HAP-1 (cell line): ENCODE measurements at regions of chr13 and their contacts with region 1.

Region 1: DNA sequence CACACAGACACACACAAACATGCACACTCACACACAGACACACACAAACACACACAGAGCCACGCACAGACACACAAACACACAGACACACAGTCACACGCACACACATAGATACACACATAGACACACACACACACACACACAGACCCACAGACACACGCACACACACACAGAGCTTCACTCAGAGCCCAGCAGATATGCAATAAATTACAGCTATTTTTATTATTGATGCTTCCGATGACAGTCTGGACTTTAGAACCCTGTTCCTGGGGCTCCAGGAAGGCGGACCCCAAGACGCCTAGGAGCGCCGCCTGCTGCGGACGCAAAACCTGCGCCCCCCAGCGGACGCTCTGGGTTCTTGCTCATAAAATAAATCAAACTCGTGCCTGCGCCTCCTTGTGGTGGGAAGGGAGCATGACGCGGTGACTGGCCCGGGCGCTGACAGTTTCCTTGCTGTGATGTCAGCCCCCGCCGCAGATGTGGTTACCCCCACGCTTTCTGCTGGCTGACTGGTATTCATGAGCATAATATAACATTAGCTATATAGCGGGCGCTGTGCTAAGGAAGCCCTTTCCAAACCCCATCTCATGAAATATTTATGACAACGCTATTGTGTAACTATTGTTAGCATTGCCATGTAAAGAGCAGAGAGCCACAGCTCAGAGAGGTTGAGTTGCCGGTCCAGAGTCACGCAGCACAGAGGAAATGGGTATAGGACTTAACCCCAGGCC is 64.4 kb upstream of the TM9SF2 start:
- DNase-seq: peak; percentile 67 to 88
- H3K4me3 ChIP-seq: no peak overlapping the region; the same call in 1 of the 2 replicates
- H3K4me1 ChIP-seq: peaks cover 8% of the 10 kb centered on the region
- H3K27me3 ChIP-seq: no peaks in the 10 kb centered on the region

Region 2: GRCh38 chr13:98957731-98958442 is 479.0 kb before region 1 on chr13:
- in situ Hi-C with region 1: no loop called
- DNase-seq: no peak
- H3K4me3 ChIP-seq: no peak overlapping the region
- H3K4me1 ChIP-seq: no peaks in the 10 kb centered on the region
- H3K27me3 ChIP-seq: no peaks in the 10 kb centered on the region

Region 3: DNA sequence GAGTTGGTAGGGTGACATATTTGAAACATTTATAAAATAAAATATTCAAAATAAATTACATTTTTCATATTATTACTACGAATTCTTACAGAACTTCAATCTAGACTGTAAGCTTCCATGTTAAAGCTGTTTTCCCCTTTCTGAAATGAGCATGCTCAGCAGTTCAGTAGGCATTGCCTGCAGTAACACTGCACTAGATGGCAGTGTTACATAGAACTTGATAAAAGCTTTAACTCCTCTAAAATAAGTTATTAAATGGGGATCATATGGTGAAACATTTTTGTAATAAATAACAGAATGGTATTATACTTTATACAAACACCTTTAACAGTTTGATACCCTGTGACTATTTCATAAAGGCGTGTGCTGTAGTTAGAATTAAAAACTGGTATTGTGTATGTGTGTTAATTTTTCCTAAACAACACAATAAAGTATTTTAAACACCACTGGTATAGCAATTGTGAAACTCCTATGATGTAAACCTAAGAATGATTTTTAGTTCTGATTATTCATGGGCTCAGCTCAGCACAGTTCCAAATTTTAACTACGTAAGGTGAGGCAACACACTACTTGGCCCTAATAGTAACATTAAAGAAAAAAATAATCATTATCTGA is 167.1 kb before region 1 on chr13:
- in situ Hi-C with region 1: loop called (anchors 10 kb)
- DNase-seq: no peak
- H3K4me3 ChIP-seq: no peak overlapping the region
- H3K4me1 ChIP-seq: no peaks in the 10 kb centered on the region
- H3K27me3 ChIP-seq: no peaks in the 10 kb centered on the region

Region 4: GRCh38 chr13:99606324-99607066 is 169.6 kb after region 1 on chr13:
- in situ Hi-C with region 1: no loop called
- DNase-seq: peak; percentile 76 to 93
- H3K4me3 ChIP-seq: peak within 1 kb of the TSS; percentile 68
- H3K4me1 ChIP-seq: peaks cover 23% of the 10 kb centered on the region
- H3K27me3 ChIP-seq: no peaks in the 10 kb centered on the region

Region 5: DNA sequence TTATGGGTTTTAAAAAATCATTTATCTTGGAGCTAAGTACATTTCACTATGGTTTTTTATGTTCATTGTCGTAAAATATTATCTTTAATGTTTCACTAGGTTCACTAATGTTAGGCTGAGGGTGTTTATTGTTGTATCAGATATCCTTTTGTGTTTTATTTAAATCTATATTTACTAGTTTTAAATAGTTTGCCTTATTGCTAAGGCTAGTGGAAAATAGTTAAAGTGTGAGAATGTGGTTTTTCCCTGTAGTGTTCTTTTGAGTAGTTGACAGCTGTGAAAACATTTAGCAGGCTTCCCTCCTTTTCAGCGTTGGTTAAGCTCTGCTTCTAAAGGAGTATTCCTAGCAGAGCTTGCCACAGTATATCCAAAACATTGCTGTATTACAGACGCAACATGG is 203.4 kb after region 1 on chr13:
- in situ Hi-C with region 1: no loop called
- DNase-seq: no peak
- H3K4me3 ChIP-seq: no peak overlapping the region
- H3K4me1 ChIP-seq: peaks cover 6% of the 10 kb centered on the region
- H3K27me3 ChIP-seq: no peaks in the 10 kb centered on the region